ENCODE measurements at regions of chr17 and their contacts with region 1.

Region 1: DNA sequence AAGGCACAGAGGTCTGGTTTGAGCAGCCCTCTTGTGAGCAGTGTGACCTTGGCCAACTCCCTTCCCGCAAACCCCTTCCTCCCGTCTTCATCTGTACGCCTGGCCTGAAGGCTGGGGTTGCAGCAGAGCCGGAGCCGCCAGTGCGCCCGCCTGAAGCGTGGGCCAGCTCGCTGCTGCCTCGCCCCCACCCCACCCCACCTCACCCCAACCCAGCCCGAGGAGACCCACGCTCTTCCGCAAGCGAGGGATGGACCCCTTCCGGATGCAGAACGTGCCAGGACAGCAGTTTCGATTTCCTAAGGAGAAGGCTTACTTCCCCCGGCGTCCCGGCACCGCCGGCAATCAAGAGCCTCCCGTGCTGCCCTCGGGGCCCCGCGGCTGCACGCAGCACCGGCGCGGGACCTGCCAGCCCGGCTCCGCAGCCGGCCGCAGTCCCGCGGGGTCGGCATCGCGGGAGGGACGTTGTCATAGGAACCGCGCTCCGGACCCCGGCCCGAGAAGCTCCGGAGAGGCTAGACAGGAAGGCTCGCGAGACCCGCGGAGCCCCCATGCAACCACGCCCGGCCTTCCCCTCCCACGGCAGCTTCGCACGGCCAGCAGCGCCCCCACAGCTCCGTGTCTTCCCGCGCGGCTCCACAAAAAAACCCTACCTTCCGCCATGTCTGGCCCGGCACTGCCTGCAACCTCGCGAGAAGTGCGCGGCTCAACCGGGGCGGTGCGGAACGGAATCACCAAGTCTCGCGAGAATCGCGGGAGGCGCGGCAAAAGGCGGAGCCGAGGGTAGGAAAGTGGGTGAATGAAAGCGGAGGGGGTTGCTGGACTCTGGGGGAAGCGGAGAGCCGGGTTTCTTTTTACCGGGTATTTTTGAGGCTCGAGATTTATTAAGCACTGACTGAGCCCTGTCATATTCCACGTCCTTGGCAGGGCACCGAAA is at the start of gene ANKFY1:
- DNase-seq: peak; percentile 97
- ATAC-seq: peak; percentile 96
- H3K4me3 ChIP-seq: peak within 1 kb of the TSS; percentile 53 to 82 (median 77)
- H3K4me3 Mint-ChIP-seq: peak within 1 kb of the TSS; percentile 92
- H3K27ac ChIP-seq: peak within 1 kb of the TSS; percentile 38 to 89
- H3K27ac Mint-ChIP-seq: peak within 1 kb of the TSS; percentile 82
- H3K4me1 ChIP-seq: peaks cover 19 to 27% of the 10 kb centered on the region in 2 donors
- H3K4me1 Mint-ChIP-seq: peaks cover 38% of the 10 kb centered on the region
- H3K27me3 ChIP-seq: no peaks in the 10 kb centered on the region
- H3K27me3 Mint-ChIP-seq: no peaks in the 10 kb centered on the region
- CTCF ChIP-seq: no peak
- total RNA-seq, gene ANKFY1: 63.9 and 68.4 TPM in 2 replicates

Region 2: GRCh38 chr17:4143563-4144421 is 119.8 kb before region 1 on chr17:
- CTCF ChIA-PET with region 1: interaction called, 3 read pairs
- POLR2A ChIA-PET with region 1: interaction called, 12 read pairs
- intact Hi-C with region 1: loop called (anchors 5 kb)
- DNase-seq: peak; percentile 97
- ATAC-seq: peak; percentile 69
- H3K4me3 ChIP-seq: peak overlapping the region; percentile 65 to 95 (median 93)
- H3K4me3 Mint-ChIP-seq: peak overlapping the region; percentile 94
- H3K27ac ChIP-seq: peak overlapping the region; percentile 98 to 99
- H3K27ac Mint-ChIP-seq: peak overlapping the region; percentile 100
- H3K4me1 ChIP-seq: peaks cover 22 to 26% of the 10 kb centered on the region in 2 donors
- H3K4me1 Mint-ChIP-seq: peaks cover 39% of the 10 kb centered on the region
- H3K27me3 ChIP-seq: no peaks in the 10 kb centered on the region
- H3K27me3 Mint-ChIP-seq: no peaks in the 10 kb centered on the region
- CTCF ChIP-seq: no peak

Region 3: DNA sequence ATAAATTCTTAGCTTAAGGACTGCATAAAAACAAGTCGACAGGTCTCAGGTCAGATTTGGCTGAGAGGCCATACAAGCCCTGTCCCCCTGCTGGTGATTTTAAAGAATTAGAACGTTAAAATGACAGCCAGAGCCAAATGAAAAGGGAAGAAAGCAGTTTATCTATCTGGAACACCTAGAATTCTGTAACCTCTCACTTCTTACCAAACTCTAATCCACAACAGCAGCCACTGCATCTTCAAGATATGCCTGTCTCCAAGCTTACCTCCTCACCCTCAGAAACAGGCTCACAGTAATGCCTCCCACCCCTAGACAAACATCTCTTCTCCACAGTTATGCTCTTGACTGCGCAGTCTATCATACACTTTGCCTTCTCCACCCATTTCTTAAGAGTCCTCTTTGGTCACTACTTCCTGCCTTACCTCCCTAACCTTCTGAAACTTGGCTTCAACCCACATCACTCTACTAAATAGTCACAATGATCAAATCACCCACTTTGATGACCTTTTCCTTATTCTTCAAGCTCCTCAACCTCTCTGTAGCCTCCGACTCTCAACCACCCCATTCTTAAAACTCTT is 14.0 kb before region 1 on chr17:
- CTCF ChIA-PET with region 1: interaction called, 25 read pairs
- POLR2A ChIA-PET with region 1: no interaction called
- intact Hi-C with region 1: no loop called
- DNase-seq: peak; percentile 45
- ATAC-seq: no peak
- H3K4me3 ChIP-seq: no peak overlapping the region
- H3K4me3 Mint-ChIP-seq: no peak overlapping the region
- H3K27ac ChIP-seq: peak overlapping the region in 1 of 2 donors; percentile 23
- H3K27ac Mint-ChIP-seq: no peak overlapping the region
- H3K4me1 ChIP-seq: peaks cover 0 to 5% of the 10 kb centered on the region in 2 donors
- H3K4me1 Mint-ChIP-seq: peaks cover 28% of the 10 kb centered on the region
- H3K27me3 ChIP-seq: no peaks in the 10 kb centered on the region
- H3K27me3 Mint-ChIP-seq: no peaks in the 10 kb centered on the region
- CTCF ChIP-seq: peak; percentile 76

Region 4: DNA sequence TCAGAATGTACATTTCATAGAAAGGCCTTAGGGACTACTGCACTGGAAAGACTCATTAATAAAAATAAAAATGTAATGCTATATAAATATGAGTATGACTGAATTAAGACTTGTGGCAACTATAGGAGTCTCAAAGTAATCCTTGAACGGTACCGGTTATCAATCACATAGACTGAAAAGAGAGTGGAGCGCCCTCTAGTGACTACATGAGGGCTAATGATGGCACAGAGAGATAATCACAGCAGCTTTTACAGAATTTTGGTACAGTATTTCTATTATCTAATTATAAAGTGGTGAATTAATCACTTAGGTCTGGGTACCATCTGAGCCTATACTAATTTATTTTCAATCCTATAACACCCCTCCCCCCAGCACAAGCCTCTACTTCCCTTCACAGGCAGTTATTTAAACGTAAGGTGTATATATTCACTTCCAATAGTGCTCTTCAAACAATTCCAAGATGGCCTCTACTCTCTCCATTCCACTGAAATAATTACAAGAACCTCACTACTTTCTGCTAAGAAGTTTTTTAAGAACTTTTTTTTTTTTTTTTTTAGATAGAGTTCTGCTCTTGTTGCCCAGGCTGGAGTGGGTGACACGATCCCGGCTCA is 41.0 kb after region 1 on chr17:
- CTCF ChIA-PET with region 1: no interaction called
- POLR2A ChIA-PET with region 1: interaction called, 10 read pairs
- intact Hi-C with region 1: no loop called
- DNase-seq: peak; percentile 70
- ATAC-seq: peak; percentile 49
- H3K4me3 ChIP-seq: no peak overlapping the region
- H3K4me3 Mint-ChIP-seq: no peak overlapping the region
- H3K27ac ChIP-seq: no peak overlapping the region
- H3K27ac Mint-ChIP-seq: no peak overlapping the region
- H3K4me1 ChIP-seq: peaks cover 9 to 11% of the 10 kb centered on the region in 2 donors
- H3K4me1 Mint-ChIP-seq: peaks cover 23% of the 10 kb centered on the region
- H3K27me3 ChIP-seq: no peaks in the 10 kb centered on the region
- H3K27me3 Mint-ChIP-seq: no peaks in the 10 kb centered on the region
- CTCF ChIP-seq: peak; percentile 89

Region 5: GRCh38 chr17:4366327-4367063 is 102.9 kb after region 1 on chr17 and contains the start of gene UBE2G1:
- CTCF ChIA-PET with region 1: no interaction called
- POLR2A ChIA-PET with region 1: interaction called, 3 read pairs
- intact Hi-C with region 1: loop called (anchors 1 kb)
- DNase-seq: peak; percentile 99
- ATAC-seq: peak; percentile 81
- H3K4me3 ChIP-seq: peak within 1 kb of the TSS; percentile 50 to 97 (median 90)
- H3K4me3 Mint-ChIP-seq: peak within 1 kb of the TSS; percentile 87
- H3K27ac ChIP-seq: peak within 1 kb of the TSS; percentile 63 to 89
- H3K27ac Mint-ChIP-seq: peak within 1 kb of the TSS; percentile 93
- H3K4me1 ChIP-seq: peaks cover 10 to 34% of the 10 kb centered on the region in 2 donors
- H3K4me1 Mint-ChIP-seq: peaks cover 44% of the 10 kb centered on the region
- H3K27me3 ChIP-seq: no peaks in the 10 kb centered on the region
- H3K27me3 Mint-ChIP-seq: no peaks in the 10 kb centered on the region
- CTCF ChIP-seq: no peak
- total RNA-seq, gene UBE2G1: 76.0 and 78.1 TPM in 2 replicates

Region 6: GRCh38 chr17:4492721-4493561 is 229.4 kb after region 1 on chr17:
- CTCF ChIA-PET with region 1: no interaction called
- POLR2A ChIA-PET with region 1: no interaction called
- intact Hi-C with region 1: no loop called
- DNase-seq: no peak
- ATAC-seq: peak; percentile 16
- H3K4me3 ChIP-seq: no peak overlapping the region
- H3K4me3 Mint-ChIP-seq: peak overlapping the region; percentile 5
- H3K27ac ChIP-seq: no peak overlapping the region
- H3K27ac Mint-ChIP-seq: peak overlapping the region; percentile 16
- H3K4me1 ChIP-seq: peaks cover 9 to 21% of the 10 kb centered on the region in 2 donors
- H3K4me1 Mint-ChIP-seq: peaks cover 25% of the 10 kb centered on the region
- H3K27me3 ChIP-seq: peaks cover 0 to 2% (median 0%) of the 10 kb centered on the region in 4 experiments
- H3K27me3 Mint-ChIP-seq: no peaks in the 10 kb centered on the region
- CTCF ChIP-seq: no peak